ENCODE measurements at regions of chr17 and their contacts with region 1.

Region 1: DNA sequence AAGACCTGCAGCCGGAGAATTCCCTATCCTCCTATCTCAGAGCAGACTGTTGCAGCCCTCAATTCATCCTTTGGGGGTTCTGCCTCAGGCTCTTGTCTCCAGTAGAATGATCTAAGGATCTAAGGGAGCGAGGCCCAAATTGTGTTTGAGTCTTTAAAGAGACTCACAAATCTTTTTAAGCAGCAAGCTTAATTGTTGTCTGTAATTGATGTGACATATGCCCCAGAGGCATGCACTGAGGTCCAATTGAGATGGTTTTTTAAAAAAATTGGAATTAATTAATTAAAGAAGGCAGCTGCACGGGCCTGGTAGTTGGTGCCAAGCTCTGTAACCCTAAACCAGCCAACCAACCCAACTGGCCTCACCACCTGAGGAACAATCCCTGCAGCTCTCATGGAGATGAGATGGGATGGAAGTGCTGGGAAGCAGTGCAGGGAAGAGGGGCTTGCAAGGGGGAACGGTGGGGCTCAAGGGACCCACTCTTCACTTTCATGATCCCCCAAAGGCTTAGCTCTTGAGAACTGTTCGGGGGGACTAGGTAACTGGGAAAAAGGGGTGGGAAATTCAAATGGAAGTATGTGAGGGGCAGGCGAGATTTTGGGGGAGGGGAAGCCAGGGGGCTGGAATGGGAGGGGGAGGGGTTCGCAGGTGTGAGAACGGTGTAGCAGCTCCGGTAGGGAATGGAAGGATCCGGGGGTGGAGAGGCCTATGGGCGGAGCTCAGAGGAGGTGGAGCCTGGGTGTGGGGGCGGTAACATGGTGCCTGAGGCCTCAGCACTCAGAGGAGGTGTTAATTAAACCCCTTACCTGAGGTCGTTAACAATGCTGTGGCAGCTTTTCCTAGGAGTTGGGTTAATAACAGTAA is 9.2 kb upstream of the ZNF652 start:
- DNase-seq: no peak
- ATAC-seq: no peak
- H3K4me3 ChIP-seq: no peak overlapping the region
- H3K27ac ChIP-seq: no peak overlapping the region
- H3K4me1 ChIP-seq: no peaks in the 10 kb centered on the region
- H3K27me3 ChIP-seq: no peaks in the 10 kb centered on the region
- CTCF ChIP-seq: no peak
- EP300 ChIP-seq: no peak
- POLR2A ChIP-seq: no peak
- RAD21 ChIP-seq: no peak

Region 2: GRCh38 chr17:49108318-49108717 is 262.9 kb before region 1 on chr17:
- CTCF ChIA-PET with region 1: no interaction called
- POLR2A ChIA-PET with region 1: no interaction called
- RAD21 ChIA-PET with region 1: no interaction called
- SMC1A ChIA-PET with region 1: no interaction called
- in situ Hi-C with region 1: no loop called
- intact Hi-C with region 1: no loop called
- DNase-seq: no peak
- ATAC-seq: no peak
- H3K4me3 ChIP-seq: no peak overlapping the region
- H3K27ac ChIP-seq: no peak overlapping the region
- H3K4me1 ChIP-seq: no peaks in the 10 kb centered on the region
- H3K27me3 ChIP-seq: no peaks in the 10 kb centered on the region; a peak in 2 of 4 replicates
- CTCF ChIP-seq: no peak
- EP300 ChIP-seq: no peak
- POLR2A ChIP-seq: no peak
- RAD21 ChIP-seq: no peak

Region 3: GRCh38 chr17:49297141-49297540 is 74.1 kb before region 1 on chr17:
- CTCF ChIA-PET with region 1: interaction called, 12 read pairs
- POLR2A ChIA-PET with region 1: no interaction called
- RAD21 ChIA-PET with region 1: interaction called, 3 read pairs
- SMC1A ChIA-PET with region 1: interaction called, 4 read pairs
- in situ Hi-C with region 1: no loop called
- intact Hi-C with region 1: no loop called
- DNase-seq: no peak
- ATAC-seq: no peak
- H3K4me3 ChIP-seq: no peak overlapping the region
- H3K27ac ChIP-seq: no peak overlapping the region
- H3K4me1 ChIP-seq: no peaks in the 10 kb centered on the region
- H3K27me3 ChIP-seq: no peaks in the 10 kb centered on the region
- CTCF ChIP-seq: no peak
- EP300 ChIP-seq: no peak
- POLR2A ChIP-seq: no peak
- RAD21 ChIP-seq: no peak

Region 4: GRCh38 chr17:49327835-49328784 is 43.1 kb before region 1 on chr17:
- CTCF ChIA-PET with region 1: interaction called, 13 read pairs
- POLR2A ChIA-PET with region 1: no interaction called
- RAD21 ChIA-PET with region 1: interaction called, 8 read pairs
- SMC1A ChIA-PET with region 1: interaction called, 16 read pairs
- in situ Hi-C with region 1: no loop called
- intact Hi-C with region 1: no loop called
- DNase-seq: no peak
- ATAC-seq: peak; percentile 90
- H3K4me3 ChIP-seq: no peak overlapping the region
- H3K27ac ChIP-seq: peak overlapping the region; percentile 39
- H3K4me1 ChIP-seq: peaks cover 13% of the 10 kb centered on the region
- H3K27me3 ChIP-seq: no peaks in the 10 kb centered on the region
- CTCF ChIP-seq: no peak
- EP300 ChIP-seq: no peak
- POLR2A ChIP-seq: no peak
- RAD21 ChIP-seq: no peak

Region 5: GRCh38 chr17:49343273-49343672 is 27.9 kb before region 1 on chr17:
- CTCF ChIA-PET with region 1: interaction called, 21 read pairs
- POLR2A ChIA-PET with region 1: interaction called, 4 read pairs
- RAD21 ChIA-PET with region 1: interaction called, 9 read pairs
- SMC1A ChIA-PET with region 1: interaction called, 16 read pairs
- in situ Hi-C with region 1: no loop called
- intact Hi-C with region 1: no loop called
- DNase-seq: no peak
- ATAC-seq: peak; percentile 28
- H3K4me3 ChIP-seq: no peak overlapping the region
- H3K27ac ChIP-seq: peak overlapping the region; percentile 47
- H3K4me1 ChIP-seq: peaks cover 32% of the 10 kb centered on the region
- H3K27me3 ChIP-seq: no peaks in the 10 kb centered on the region
- CTCF ChIP-seq: no peak
- EP300 ChIP-seq: no peak
- POLR2A ChIP-seq: no peak
- RAD21 ChIP-seq: no peak

Region 6: GRCh38 chr17:49349535-49349934 is 21.7 kb before region 1 on chr17:
- CTCF ChIA-PET with region 1: interaction called, 11 read pairs
- POLR2A ChIA-PET with region 1: no interaction called
- RAD21 ChIA-PET with region 1: no interaction called
- SMC1A ChIA-PET with region 1: interaction called, 3 read pairs
- in situ Hi-C with region 1: no loop called
- intact Hi-C with region 1: no loop called
- DNase-seq: no peak
- ATAC-seq: no peak
- H3K4me3 ChIP-seq: no peak overlapping the region
- H3K27ac ChIP-seq: no peak overlapping the region
- H3K4me1 ChIP-seq: peaks cover 7% of the 10 kb centered on the region; the same call in 1 of the 2 replicates
- H3K27me3 ChIP-seq: no peaks in the 10 kb centered on the region
- CTCF ChIP-seq: no peak
- EP300 ChIP-seq: no peak
- POLR2A ChIP-seq: no peak
- RAD21 ChIP-seq: no peak

Region 7: DNA sequence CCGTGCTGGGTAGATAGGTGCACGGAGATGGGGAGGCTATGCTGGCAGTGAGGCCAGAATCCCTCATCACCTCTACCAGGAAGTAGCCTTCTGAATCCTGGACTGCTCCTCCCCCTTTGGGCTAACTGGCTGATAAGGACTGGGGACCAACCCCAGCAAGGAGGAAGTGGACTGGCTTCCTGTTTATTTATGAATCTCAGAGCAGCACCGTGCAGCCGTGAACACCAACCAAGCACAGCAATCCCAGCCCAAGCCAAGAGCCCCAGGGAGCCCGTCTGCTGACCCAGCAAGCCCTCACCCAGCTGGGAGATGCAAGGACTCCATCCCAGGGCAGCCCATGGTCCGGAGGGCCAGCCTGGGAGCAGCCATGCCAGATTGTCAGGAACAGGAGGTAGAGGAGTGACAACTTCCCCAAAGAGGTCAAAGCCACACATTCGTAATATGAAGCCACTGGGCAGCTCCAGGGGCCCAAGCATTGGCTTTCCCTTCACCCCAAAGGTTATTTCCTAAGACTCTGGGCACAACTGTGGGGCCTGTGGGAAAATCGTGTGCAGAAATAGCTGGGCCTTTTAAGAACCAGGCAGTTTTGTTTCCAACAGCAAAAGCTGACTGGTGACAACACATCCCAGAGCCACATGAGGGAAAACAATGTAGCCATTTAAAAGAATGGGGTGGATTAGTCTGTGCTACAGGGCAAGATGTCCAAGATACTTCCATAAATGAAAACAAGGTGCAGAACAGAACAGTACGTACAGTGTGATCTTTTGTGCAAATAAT is 19.5 kb after region 1 on chr17:
- CTCF ChIA-PET with region 1: interaction called, 24 read pairs
- POLR2A ChIA-PET with region 1: interaction called, 4 read pairs
- RAD21 ChIA-PET with region 1: interaction called, 12 read pairs
- SMC1A ChIA-PET with region 1: interaction called, 8 read pairs
- in situ Hi-C with region 1: no loop called
- intact Hi-C with region 1: no loop called
- DNase-seq: no peak
- ATAC-seq: peak; percentile 59
- H3K4me3 ChIP-seq: peak overlapping the region; percentile 42; the same call in 1 of the 2 replicates
- H3K27ac ChIP-seq: peak overlapping the region; percentile 64
- H3K4me1 ChIP-seq: peaks cover 39% of the 10 kb centered on the region
- H3K27me3 ChIP-seq: no peaks in the 10 kb centered on the region
- CTCF ChIP-seq: no peak
- EP300 ChIP-seq: no peak
- POLR2A ChIP-seq: no peak
- RAD21 ChIP-seq: no peak

Region 8: DNA sequence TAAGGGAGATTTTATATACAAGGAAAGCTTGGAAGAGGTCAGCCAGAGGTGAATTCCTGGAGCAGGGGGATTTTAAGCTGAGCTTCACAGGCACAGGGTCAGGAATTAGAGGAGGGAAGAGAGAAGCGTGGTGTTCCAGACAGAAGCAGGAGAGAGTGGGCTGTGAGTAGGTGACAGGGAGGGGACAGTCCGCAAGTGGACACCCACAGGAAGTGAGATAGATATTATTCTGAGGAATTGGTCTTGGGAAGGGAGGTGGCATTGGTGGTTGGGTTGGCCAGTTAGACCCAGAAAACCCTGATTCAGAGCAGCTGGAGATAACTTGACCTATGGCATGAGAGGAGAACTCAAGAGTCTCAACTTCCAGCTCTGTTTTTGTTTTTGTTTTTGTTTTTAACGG is 28.8 kb after region 1 on chr17:
- CTCF ChIA-PET with region 1: interaction called, 13 read pairs
- POLR2A ChIA-PET with region 1: interaction called, 4 read pairs
- RAD21 ChIA-PET with region 1: interaction called, 9 read pairs
- SMC1A ChIA-PET with region 1: interaction called, 8 read pairs
- in situ Hi-C with region 1: no loop called
- intact Hi-C with region 1: no loop called
- DNase-seq: no peak
- ATAC-seq: no peak
- H3K4me3 ChIP-seq: no peak overlapping the region
- H3K27ac ChIP-seq: no peak overlapping the region
- H3K4me1 ChIP-seq: peaks cover 6% of the 10 kb centered on the region
- H3K27me3 ChIP-seq: no peaks in the 10 kb centered on the region
- CTCF ChIP-seq: no peak
- EP300 ChIP-seq: no peak
- POLR2A ChIP-seq: no peak
- RAD21 ChIP-seq: no peak

Region 9: GRCh38 chr17:49640556-49640955 is 269.4 kb after region 1 on chr17:
- CTCF ChIA-PET with region 1: no interaction called
- POLR2A ChIA-PET with region 1: no interaction called
- RAD21 ChIA-PET with region 1: no interaction called
- SMC1A ChIA-PET with region 1: no interaction called
- in situ Hi-C with region 1: no loop called
- intact Hi-C with region 1: no loop called
- DNase-seq: no peak
- ATAC-seq: no peak
- H3K4me3 ChIP-seq: no peak overlapping the region
- H3K27ac ChIP-seq: no peak overlapping the region
- H3K4me1 ChIP-seq: peaks cover 11% of the 10 kb centered on the region
- H3K27me3 ChIP-seq: no peaks in the 10 kb centered on the region
- CTCF ChIP-seq: no peak
- EP300 ChIP-seq: no peak
- POLR2A ChIP-seq: no peak
- RAD21 ChIP-seq: no peak